ENCODE measurements at regions of chr20 and their contacts with region 1.

Region 1: DNA sequence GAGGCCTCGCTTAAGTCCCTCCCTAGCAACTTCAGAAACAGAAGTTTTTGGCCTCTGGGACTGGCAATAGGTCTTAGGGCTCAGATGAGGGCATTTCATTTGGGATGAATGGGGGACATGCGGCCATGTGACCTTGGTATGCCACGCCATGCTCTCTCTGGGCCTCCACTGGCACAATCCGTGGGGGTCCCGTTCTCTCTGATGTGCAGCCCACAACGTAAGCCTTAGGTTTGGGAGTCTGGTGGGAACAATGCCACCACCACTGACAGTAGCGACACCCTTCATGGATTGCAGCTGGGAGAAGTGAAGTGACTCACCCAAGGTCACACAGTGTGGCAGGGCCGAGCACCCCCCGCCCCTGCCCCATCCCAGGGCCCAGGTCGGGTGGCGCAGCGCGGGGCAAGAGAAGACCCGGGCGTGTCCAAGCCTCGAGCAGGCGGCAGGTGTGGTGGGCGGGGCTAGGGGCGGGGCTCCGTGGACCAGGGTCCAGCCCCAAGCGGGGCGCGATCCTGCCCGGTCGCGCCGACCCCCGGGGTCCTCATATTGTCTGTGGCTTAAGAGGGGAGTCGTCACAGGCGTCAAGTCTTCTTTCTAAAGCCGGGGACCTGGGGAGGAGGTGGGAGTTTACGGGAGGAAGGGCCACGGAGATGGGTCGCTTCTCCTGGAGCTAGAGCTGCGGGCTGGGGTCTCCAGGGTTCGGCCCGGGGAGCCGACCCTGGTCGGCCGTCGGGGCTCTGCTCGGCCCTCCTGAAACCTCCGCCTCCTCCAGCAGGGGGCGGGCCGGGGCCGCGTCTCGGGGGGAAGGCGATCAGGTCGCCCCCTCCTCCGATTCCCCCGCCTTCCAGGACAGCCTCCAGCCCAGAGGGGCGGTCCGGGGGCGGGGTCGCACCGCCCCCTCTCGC is 698 bp upstream of the CEBPB start:
- DNase-seq: peak; percentile 82
- H3K4me3 Mint-ChIP-seq: peak overlapping the region; percentile 51
- H3K27ac Mint-ChIP-seq: peak overlapping the region; percentile 65
- H3K4me1 Mint-ChIP-seq: peaks cover 32% of the 10 kb centered on the region
- H3K27me3 Mint-ChIP-seq: peaks cover 6% of the 10 kb centered on the region

Region 2: DNA sequence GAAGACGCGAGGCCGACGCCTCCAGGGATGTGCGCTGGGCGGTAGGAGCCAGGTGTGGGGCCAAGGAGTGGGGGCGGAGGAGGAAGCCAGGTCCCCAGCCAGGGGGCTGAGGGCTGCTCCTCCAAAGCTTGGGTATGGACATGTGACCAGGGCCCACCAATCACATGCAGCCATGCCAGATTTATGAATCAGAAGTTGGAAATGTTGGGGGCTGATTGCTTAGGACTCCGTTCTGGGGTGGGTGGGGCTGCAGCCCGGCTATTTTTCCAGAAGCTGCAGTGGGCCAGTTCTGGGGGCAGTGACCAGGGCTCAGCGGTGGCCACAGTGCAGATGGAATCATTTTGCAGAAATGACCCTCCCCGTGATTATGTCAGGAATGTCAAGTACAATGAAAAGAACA is 96.7 kb after region 1 on chr20:
- intact Hi-C with region 1: loop called (anchors 5 kb)
- DNase-seq: no peak
- H3K4me3 Mint-ChIP-seq: no peak overlapping the region
- H3K27ac Mint-ChIP-seq: no peak overlapping the region
- H3K4me1 Mint-ChIP-seq: peaks cover 31% of the 10 kb centered on the region
- H3K27me3 Mint-ChIP-seq: peaks cover 3% of the 10 kb centered on the region

Region 3: GRCh38 chr20:50460460-50461267 is 270.7 kb after region 1 on chr20:
- intact Hi-C with region 1: loop called (anchors 1 kb)
- DNase-seq: peak; percentile 76
- H3K4me3 Mint-ChIP-seq: no peak overlapping the region
- H3K27ac Mint-ChIP-seq: no peak overlapping the region
- H3K4me1 Mint-ChIP-seq: peaks cover 25% of the 10 kb centered on the region
- H3K27me3 Mint-ChIP-seq: peaks cover 4% of the 10 kb centered on the region

Region 4: GRCh38 chr20:50569864-50570836 is 380.2 kb after region 1 on chr20:
- intact Hi-C with region 1: loop called (anchors 1 kb)
- DNase-seq: peak; percentile 47
- H3K4me3 Mint-ChIP-seq: peak overlapping the region; percentile 51
- H3K27ac Mint-ChIP-seq: peak overlapping the region; percentile 87
- H3K4me1 Mint-ChIP-seq: peaks cover 69% of the 10 kb centered on the region
- H3K27me3 Mint-ChIP-seq: no peaks in the 10 kb centered on the region

Region 5: DNA sequence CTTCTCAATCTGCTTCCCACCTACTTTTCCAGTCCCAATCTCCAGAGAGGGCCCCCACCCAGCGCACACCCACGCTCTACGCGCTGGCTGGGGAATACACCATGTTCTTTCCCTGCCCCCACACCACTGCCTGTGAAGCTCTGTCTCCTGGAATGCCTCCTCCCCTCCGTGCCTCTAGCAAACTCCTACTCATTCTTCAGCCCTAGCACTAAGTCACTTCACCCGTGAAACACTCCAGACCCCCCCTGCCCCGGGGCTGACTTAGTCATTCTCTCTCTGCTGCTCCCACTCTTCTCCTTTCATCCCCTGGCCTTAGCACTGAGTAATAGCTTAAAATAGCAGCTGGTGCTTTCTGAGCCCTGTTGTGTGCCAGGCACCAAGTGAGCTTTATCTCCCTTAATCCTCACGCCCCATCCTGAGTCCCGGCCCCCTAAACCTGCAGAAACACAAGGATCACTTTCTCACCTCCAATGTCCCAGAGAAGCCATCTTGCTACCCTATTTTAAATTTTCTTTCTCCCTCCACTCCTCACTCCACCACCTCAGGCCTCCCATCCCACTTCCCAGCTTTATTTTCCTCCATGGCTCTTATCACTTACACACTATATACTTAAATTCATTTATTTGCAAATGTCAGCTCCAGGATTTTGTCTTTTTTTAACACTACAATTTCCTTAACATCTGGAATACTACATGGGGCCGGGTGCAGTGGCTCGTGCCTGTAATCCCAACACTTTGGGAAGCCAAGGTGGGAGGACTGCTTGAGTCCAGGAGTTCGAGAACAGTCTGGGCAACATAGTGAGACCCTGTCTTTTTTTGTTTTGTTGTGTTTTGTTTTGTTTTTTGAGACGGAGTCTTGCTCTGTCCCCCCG is 535.2 kb after region 1 on chr20:
- intact Hi-C with region 1: loop called (anchors 2 kb)
- DNase-seq: no peak
- H3K4me3 Mint-ChIP-seq: no peak overlapping the region
- H3K27ac Mint-ChIP-seq: no peak overlapping the region
- H3K4me1 Mint-ChIP-seq: peaks cover 12% of the 10 kb centered on the region
- H3K27me3 Mint-ChIP-seq: peaks cover 1% of the 10 kb centered on the region

Measured in activated T-helper 1 cell treated with anti-CD3 and anti-CD28 coated beads, Interleukin-12 subunit alpha, Interleukin-12 subunit beta, Interleukin-2, Interleukin-4 antibody, amounts not matched to agents 30 ng/mL and 10 ng/mL and 1 ng/mL, durations not matched to agents 14 hours and 24 hours and 36 hours (primary cell).